ENCODE measurements at regions of chr3 and their contacts with region 1.

Region 1: GRCh38 chr3:46372492-46373359 is 2.0 kb downstream of the CCR5 start:
- DNase-seq: no peak

Region 2: GRCh38 chr3:45218578-45219390 is 1153.9 kb before region 1 on chr3:
- intact Hi-C with region 1: loop called in 1 of 2 experiments (anchors 5 kb)
- DNase-seq: no peak

Region 3: GRCh38 chr3:46462111-46462510 is 89.4 kb after region 1 on chr3:
- intact Hi-C with region 1: no loop called
- DNase-seq: no peak

Region 4: DNA sequence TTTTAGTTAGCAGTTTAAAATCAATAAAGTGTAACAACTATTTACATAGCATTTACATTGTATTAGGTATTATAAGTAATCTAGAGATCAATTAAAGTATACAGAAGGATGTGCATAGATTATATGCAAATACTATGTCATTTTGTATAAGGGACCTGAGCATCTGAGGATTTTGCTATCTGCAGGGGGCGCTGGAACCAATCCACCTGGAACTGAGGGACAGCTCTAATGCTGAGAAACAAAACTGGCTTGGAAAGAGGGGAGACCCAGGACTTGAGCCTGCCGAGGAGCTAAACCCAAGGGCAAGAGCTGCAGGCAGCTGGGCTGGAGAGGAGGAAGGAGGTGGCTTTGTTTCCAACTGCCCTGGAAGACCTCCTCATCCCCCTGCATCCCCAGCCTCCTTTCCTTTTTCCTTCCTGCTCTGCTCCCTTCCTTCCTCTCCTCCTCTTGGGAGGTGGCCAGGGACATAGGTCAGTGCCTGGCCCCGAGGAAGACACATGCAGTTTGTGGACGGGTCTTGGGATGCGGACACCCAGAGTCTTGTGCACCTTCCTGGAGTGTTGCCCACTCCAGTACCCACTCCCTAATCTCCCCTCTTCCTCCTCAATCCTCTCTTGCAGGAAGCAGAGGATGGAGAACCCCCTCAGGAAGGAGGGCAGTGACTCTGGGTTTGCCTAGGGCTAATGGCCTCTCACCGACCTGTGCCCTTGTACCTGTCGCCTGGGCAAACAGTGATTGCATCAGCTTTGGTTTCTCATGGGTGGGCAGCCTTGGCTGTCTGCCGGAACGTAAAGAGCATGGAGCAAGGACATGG is 124.2 kb after region 1 on chr3:
- intact Hi-C with region 1: no loop called
- DNase-seq: no peak

Region 5: GRCh38 chr3:46860017-46860830 is 487.5 kb after region 1 on chr3:
- intact Hi-C with region 1: no loop called
- DNase-seq: peak; percentile 64

Measured in posterior vena cava (tissue), 2 donors.